B cell (primary cell): ENCODE measurements at regions of chr9 and their contacts with region 1.

Region 1: DNA sequence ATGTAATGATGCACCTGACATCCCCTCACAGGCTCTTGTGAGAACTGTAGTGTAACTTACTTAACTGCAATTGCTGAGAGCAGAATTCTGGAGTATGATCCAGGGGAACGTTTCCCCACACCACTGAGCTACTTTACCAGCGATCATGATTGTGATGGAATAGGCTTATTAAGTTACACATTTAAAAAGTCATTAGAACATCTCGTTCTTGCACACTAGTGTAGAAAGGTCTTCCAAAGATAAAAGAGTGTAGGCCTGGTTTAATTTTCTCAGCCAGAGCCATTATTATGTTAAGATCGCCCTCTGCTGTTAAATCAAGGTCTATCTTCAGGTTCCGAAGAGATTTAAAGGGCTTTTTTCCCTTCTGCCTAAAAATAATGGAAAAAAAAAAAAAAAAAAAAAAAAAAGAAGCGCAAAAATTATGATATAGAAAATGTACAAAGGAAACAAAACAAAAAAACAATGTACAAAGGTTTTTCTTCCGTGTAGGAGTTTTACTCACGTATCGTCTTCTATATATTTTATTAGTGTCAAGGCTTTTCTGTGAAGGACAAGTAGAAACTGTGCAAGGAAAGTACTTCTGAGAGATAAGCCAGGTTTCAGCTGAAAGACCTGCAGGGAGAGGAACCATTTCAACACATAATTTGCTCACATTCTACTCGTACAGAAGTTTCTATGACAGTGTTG is 18.6 kb upstream of the MOB3B start:
- DNase-seq: peak; percentile 59
- ATAC-seq: peak; percentile 33
- H3K4me3 ChIP-seq: no peak overlapping the region
- H3K4me3 Mint-ChIP-seq: no peak overlapping the region
- H3K27ac ChIP-seq: no peak overlapping the region
- H3K27ac Mint-ChIP-seq: no peak overlapping the region
- H3K4me1 ChIP-seq: no peaks in the 10 kb centered on the region
- H3K4me1 Mint-ChIP-seq: no peaks in the 10 kb centered on the region
- H3K27me3 ChIP-seq: no peaks in the 10 kb centered on the region
- H3K27me3 Mint-ChIP-seq: no peaks in the 10 kb centered on the region
- CTCF ChIP-seq: peak; percentile 68

Region 2: DNA sequence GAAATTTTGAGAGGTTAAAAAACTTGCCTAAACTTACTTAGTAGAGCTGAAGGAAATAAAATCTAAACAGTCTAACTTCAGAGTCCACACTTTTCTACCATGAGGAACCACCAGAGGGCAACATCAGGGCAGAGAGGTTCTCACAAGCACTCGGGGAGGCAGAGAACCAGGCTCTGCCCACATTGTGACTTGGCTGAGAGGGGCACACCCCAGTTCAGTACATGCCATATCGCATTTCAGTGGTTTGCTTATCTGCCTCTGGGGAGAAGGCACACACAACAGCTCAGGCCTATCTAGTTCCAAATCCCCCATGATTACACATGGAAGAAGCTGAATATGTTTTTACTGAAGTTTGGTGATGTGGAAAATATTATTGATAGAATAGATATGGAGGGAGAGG is 300.4 kb before region 1 on chr9:
- CTCF ChIA-PET with region 1: interaction called, 5 read pairs
- POLR2A ChIA-PET with region 1: no interaction called
- intact Hi-C with region 1: loop called (anchors 1 kb)
- DNase-seq: peak; percentile 27
- ATAC-seq: peak; percentile 21
- H3K4me3 ChIP-seq: no peak overlapping the region
- H3K4me3 Mint-ChIP-seq: no peak overlapping the region
- H3K27ac ChIP-seq: no peak overlapping the region
- H3K27ac Mint-ChIP-seq: no peak overlapping the region
- H3K4me1 ChIP-seq: no peaks in the 10 kb centered on the region
- H3K4me1 Mint-ChIP-seq: no peaks in the 10 kb centered on the region
- H3K27me3 ChIP-seq: peaks cover 0 to 4% (median 0%) of the 10 kb centered on the region in 4 experiments
- H3K27me3 Mint-ChIP-seq: peaks cover 17% of the 10 kb centered on the region
- CTCF ChIP-seq: peak; percentile 59

Region 3: GRCh38 chr9:27340961-27341511 is 207.2 kb before region 1 on chr9:
- CTCF ChIA-PET with region 1: interaction called, 30 read pairs
- POLR2A ChIA-PET with region 1: no interaction called
- intact Hi-C with region 1: no loop called
- DNase-seq: no peak
- ATAC-seq: no peak
- H3K4me3 ChIP-seq: no peak overlapping the region
- H3K4me3 Mint-ChIP-seq: no peak overlapping the region
- H3K27ac ChIP-seq: no peak overlapping the region
- H3K27ac Mint-ChIP-seq: no peak overlapping the region
- H3K4me1 ChIP-seq: peaks cover 0 to 15% of the 10 kb centered on the region in 2 donors
- H3K4me1 Mint-ChIP-seq: peaks cover 9% of the 10 kb centered on the region
- H3K27me3 ChIP-seq: no peaks in the 10 kb centered on the region
- H3K27me3 Mint-ChIP-seq: no peaks in the 10 kb centered on the region
- CTCF ChIP-seq: no peak